ENCODE measurements at regions of chr12 and their contacts with region 1.

Region 1: DNA sequence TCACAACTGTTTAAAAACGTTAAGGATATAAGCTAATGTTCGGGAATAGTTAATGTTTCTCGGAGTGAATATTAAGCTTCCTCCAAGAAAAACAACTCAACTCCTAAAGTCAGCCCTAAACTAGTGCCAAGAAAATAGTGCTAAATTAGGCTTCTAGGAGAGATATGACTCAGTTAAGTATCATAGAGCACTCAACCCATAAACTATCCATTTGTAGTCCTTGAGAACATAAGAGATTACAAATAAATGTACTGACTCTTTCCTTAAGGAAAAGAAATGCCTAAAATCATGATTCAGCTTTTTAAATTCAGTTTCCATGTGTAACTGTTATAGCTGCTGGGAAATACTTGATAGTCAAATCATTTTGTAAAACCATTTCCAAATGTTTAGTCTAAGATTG is 117.1 kb downstream of the HMGA2 start:
- DNase-seq: peak; percentile 77
- H3K4me3 Mint-ChIP-seq: peak overlapping the region; percentile 47
- H3K27ac Mint-ChIP-seq: peak overlapping the region; percentile 86
- H3K4me1 Mint-ChIP-seq: peaks cover 46% of the 10 kb centered on the region
- H3K27me3 Mint-ChIP-seq: no peaks in the 10 kb centered on the region
- CTCF ChIP-seq: no peak

Region 2: DNA sequence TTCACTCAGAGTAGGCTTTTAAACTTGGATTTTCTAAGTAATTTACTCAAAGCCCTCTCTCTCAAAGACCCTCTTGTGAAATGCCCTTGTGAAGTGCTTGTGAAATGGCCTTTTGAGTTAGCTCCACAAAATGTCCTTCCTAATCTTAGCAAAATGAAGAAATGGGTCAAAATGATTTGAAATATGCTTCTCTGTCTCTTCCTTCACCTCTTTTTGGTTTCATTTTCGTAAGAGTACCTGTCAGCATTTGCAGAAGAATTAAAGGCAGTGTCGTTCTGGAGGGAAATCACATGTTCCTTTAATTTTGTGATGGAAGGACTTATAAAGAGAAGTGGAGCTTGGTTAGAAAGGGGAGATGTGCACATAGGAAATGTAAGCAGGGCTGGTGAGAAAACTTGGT is 23.4 kb before region 1 on chr12:
- CTCF ChIA-PET with region 1: interaction called, 6 read pairs
- POLR2A ChIA-PET with region 1: interaction called, 11 read pairs
- intact Hi-C with region 1: no loop called
- DNase-seq: no peak
- H3K4me3 Mint-ChIP-seq: no peak overlapping the region
- H3K27ac Mint-ChIP-seq: no peak overlapping the region
- H3K4me1 Mint-ChIP-seq: peaks cover 26% of the 10 kb centered on the region
- H3K27me3 Mint-ChIP-seq: no peaks in the 10 kb centered on the region
- CTCF ChIP-seq: no peak

Region 3: DNA sequence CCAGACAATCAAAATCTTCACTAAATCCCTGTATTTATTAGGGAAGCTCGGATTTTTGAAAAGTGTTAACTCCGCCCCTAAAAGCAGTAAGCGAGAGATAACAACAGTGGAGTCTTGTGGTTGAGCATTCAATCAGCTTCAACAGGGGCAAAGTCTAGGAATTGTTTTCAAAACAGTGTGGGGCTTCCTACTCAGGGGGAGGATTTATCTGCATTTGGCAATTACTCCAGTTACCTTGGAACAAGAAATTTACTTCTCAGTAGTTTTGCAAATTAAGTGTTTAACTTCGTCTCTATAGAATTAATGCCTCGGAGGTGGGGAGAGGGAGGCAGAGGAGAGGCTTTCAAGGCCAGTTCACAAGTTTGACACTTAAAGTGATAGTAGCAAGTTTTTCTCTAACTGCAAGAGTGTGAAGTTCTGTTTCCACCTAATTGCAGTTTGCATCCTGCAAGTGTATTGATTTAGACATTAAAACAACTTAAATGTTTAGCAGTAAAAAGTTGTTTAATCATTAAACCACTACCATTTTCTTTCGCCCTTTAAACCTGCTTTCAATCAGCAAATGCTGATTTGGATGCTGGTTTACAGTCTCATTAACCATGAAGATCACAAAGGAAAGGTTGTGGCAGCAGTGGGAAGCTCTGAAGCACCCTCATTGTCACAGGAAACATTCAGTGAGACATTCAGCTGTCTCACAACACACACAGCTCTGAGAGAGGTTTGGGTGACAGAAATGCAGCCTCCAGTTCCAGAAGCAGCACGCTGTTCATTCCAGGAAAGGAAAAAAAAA is 15.1 kb before region 1 on chr12:
- CTCF ChIA-PET with region 1: interaction called, 6 read pairs
- POLR2A ChIA-PET with region 1: interaction called, 27 read pairs
- intact Hi-C with region 1: no loop called
- DNase-seq: no peak
- H3K4me3 Mint-ChIP-seq: no peak overlapping the region
- H3K27ac Mint-ChIP-seq: peak overlapping the region; percentile 59
- H3K4me1 Mint-ChIP-seq: peaks cover 41% of the 10 kb centered on the region
- H3K27me3 Mint-ChIP-seq: no peaks in the 10 kb centered on the region
- CTCF ChIP-seq: no peak

Region 4: DNA sequence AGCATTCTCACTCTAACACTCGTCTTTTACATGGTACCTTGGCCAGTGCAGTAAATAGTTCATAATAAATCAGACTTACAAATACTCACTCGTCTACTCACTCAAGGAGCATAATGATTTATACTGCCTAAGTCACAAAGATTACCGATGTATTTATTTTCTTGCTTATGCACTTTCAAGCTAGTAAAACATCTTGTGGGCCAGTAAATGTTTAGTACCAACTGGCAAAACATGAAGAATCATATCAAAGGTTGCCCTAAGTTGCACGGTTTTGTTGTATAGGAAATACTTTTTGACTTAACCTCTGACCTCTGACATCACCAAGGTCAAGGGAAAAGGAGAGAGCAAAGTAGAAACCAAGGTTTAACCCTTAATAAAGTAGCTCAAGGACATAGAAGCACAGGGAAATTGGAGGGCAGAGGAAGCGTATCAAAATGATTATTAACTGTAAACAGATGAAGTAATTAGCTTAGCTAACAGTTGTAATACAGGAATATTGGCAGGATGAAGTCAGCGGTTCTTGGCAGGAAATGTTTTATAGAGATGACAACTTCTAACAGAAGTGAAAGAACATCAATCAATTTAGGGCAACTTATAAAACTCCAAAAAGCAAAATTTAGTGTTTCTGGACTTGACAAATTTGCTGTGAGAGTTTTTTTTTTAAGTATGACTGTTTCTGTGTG is 14.8 kb after region 1 on chr12:
- CTCF ChIA-PET with region 1: interaction called, 4 read pairs
- POLR2A ChIA-PET with region 1: interaction called, 12 read pairs
- intact Hi-C with region 1: no loop called
- DNase-seq: no peak
- H3K4me3 Mint-ChIP-seq: peak overlapping the region; percentile 22
- H3K27ac Mint-ChIP-seq: peak overlapping the region; percentile 76
- H3K4me1 Mint-ChIP-seq: peaks cover 47% of the 10 kb centered on the region
- H3K27me3 Mint-ChIP-seq: no peaks in the 10 kb centered on the region
- CTCF ChIP-seq: no peak

Measured in MCF 10A (cell line).